HepG2 (cell line): ENCODE measurements at regions of chr6 and their contacts with region 1.

Region 1: GRCh38 chr6:119110601-119111548 is 32.4 kb upstream of the FAM184A start:
- DNase-seq: peak; percentile 69
- ATAC-seq: peak; percentile 93
- H3K4me3 ChIP-seq: peak overlapping the region in 2 of 3 experiments; percentile 12 to 41; a peak in 1 of 6 replicates
- H3K27ac ChIP-seq: no peak overlapping the region
- H3K4me1 ChIP-seq: peaks cover 17% of the 10 kb centered on the region
- H3K27me3 ChIP-seq: no peaks in the 10 kb centered on the region
- CTCF ChIP-seq: peak; percentile 88
- EP300 ChIP-seq: no peak
- POLR2A ChIP-seq: no peak
- RAD21 ChIP-seq: peak; percentile 86

Region 2: DNA sequence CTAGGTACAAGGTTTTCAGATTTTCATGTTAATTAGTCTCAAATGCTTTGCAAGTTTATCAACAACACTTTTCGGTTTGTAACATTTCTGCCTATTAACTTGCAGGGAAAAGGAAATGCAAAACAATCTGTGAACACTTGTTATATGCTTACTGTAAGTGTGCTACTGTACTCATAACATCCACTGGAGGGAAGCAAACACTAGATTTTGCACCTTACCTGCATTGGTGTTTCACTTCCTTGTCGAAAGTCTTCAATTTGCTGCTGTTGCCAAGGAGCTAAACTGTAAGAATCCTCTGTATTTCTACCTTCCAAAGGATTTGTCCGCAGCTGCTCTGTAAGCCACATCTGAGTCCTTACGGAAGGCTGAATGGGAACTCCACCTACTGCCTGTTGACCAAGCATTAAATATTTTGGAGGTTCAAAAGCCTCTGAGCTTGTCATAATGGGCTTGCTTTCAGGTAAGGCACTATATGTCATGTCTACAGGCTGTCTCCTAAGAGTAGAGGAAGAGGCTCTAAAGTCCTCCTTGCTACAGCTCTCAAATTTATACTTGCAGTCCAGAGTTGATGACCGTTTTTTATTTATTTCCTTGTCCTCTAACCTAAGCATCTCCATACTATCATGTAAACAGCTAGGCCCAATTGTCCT is 545.4 kb before region 1 on chr6:
- CTCF ChIA-PET with region 1: no interaction called
- POLR2A ChIA-PET with region 1: no interaction called
- in situ Hi-C with region 1: no loop called
- intact Hi-C with region 1: loop called (anchors 2 kb)
- DNase-seq: peak; percentile 36
- ATAC-seq: peak; percentile 87
- H3K4me3 ChIP-seq: no peak overlapping the region
- H3K27ac ChIP-seq: no peak overlapping the region
- H3K4me1 ChIP-seq: no peaks in the 10 kb centered on the region
- H3K27me3 ChIP-seq: no peaks in the 10 kb centered on the region
- CTCF ChIP-seq: peak; percentile 70
- EP300 ChIP-seq: no peak
- POLR2A ChIP-seq: no peak
- RAD21 ChIP-seq: peak; percentile 25; the same call in 1 of the 2 replicates

Region 3: DNA sequence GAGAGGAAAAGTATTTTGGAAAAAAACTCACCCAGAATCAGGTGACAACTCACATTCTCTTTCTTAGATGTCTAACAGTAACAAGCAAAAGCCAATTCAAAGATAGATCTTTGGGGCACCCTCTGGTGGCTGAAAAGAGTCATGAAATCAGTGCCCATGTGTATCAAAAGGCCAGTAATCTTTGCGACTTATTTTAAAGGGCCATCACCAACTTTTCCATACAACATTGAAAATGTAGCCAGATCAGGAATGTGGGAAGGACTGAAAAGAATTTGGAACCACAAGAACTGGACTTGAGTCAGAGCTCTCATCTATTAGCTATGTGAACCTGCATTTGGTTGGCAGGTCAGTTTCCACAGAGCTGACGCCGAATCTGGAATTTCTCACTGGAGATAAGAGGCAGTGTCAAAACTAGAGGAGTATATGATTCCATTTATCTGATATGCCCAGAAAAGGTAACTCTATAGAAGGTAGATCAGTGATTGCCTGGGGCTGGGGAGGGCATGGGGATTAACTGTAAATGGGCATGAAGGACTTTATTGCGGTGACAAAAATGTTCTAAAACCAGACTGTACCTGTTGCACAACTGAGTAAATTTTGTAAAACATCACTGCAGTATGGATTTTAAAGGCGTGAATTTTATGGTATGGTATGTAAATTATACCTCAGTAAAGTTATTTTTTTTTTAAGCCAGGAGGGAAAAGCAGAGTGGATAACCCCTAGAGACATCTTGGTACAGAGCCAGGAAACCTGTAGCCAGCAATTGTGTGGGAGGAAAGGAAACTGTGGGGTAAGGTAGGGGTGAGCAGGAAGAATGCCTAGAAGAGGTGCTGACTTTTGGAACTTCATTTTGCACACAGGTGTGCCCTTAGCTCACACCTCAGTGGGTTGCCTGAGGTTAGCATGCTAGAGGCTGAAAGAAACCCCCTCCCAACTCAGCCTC is 334.0 kb before region 1 on chr6:
- CTCF ChIA-PET with region 1: no interaction called
- POLR2A ChIA-PET with region 1: no interaction called
- in situ Hi-C with region 1: no loop called
- intact Hi-C with region 1: loop called (anchors 10 kb)
- DNase-seq: peak; percentile 64
- ATAC-seq: peak; percentile 91
- H3K4me3 ChIP-seq: no peak overlapping the region
- H3K27ac ChIP-seq: no peak overlapping the region
- H3K4me1 ChIP-seq: no peaks in the 10 kb centered on the region
- H3K27me3 ChIP-seq: peaks cover 0 to 10% of the 10 kb centered on the region in 2 experiments; a peak in 3 of 5 replicates
- CTCF ChIP-seq: peak; percentile 70
- EP300 ChIP-seq: no peak
- POLR2A ChIP-seq: no peak
- RAD21 ChIP-seq: peak; percentile 47

Region 4: DNA sequence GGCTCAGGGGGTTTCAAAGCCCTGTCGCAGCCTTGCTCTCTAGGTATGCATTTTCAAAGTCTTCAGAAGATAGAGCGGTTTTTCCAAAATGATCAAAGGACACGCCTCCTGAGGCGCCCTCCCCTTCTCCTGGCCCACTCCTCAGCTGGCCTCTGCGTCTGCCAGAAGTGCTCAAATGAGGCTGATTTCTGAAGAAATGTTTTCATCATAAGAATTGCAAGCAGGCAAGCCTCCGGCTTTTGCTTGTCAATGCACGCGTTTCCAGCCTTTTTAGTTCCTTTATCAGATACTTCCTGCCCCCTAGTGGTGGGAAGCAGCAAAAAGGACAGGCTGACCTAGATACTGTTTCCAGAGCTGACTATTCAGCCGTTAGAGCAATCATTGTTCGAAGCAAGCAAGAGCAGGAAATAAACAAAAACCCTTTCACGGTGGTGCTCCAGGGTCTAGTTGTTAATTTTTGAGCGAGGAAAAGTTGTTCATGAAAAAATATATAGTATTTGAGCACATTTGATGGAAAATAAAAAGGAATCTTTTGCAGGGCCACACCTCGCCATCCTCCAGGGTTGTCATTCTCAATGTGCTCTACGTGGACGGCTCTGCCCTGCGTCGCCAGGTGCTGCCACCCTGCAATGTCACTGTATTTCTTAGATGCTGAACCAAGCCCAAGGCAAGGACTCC is 310.3 kb before region 1 on chr6:
- CTCF ChIA-PET with region 1: interaction called, 3 read pairs
- POLR2A ChIA-PET with region 1: no interaction called
- in situ Hi-C with region 1: no loop called
- intact Hi-C with region 1: loop called (anchors 10 kb)
- DNase-seq: peak; percentile 82
- ATAC-seq: peak; percentile 94
- H3K4me3 ChIP-seq: peak overlapping the region in 1 of 3 experiments; percentile 31; a peak in 2 of 6 replicates
- H3K27ac ChIP-seq: no peak overlapping the region
- H3K4me1 ChIP-seq: peaks cover 16% of the 10 kb centered on the region
- H3K27me3 ChIP-seq: no peaks in the 10 kb centered on the region
- CTCF ChIP-seq: peak; percentile 92
- EP300 ChIP-seq: no peak
- POLR2A ChIP-seq: no peak
- RAD21 ChIP-seq: peak; percentile 63

Region 5: GRCh38 chr6:118893807-118894424 is 217.0 kb before region 1 on chr6 and contains the start of gene ASF1A:
- CTCF ChIA-PET with region 1: interaction called, 3 read pairs
- POLR2A ChIA-PET with region 1: interaction called, 4 read pairs
- in situ Hi-C with region 1: no loop called
- intact Hi-C with region 1: loop called (anchors 1 kb)
- DNase-seq: peak; percentile 99
- ATAC-seq: peak; percentile 93
- H3K4me3 ChIP-seq: peak within 1 kb of the TSS; percentile 84 to 98 (median 94)
- H3K27ac ChIP-seq: peak within 1 kb of the TSS; percentile 96
- H3K4me1 ChIP-seq: peaks cover 44% of the 10 kb centered on the region
- H3K27me3 ChIP-seq: no peaks in the 10 kb centered on the region; a peak in 1 of 5 replicates
- CTCF ChIP-seq: peak; percentile 94
- EP300 ChIP-seq: peak; percentile 45 to 68
- POLR2A ChIP-seq: peak; percentile 77 to 95
- RAD21 ChIP-seq: peak; percentile 74
- total RNA-seq, gene ASF1A: 49.9 and 85.2 TPM in 2 replicates

Region 6: DNA sequence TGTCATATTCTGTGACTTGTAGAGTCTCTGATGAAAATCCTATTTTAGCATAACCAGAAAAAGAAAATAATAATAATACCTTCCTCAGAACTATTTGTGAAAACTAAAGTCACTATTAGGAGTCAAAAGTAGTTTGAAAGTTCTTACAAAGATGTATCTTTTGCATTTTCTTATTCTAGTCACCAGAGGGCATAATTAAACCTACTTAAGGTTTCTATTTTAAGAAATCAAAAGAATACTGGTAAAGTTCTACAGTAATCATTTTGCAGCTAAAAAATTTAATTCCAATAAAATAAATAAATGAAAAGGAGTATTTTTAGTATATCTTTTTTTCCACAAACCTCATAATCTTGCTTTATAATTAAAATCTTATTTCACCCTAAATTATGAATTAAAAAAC is 147.9 kb before region 1 on chr6:
- CTCF ChIA-PET with region 1: interaction called, 21 read pairs
- POLR2A ChIA-PET with region 1: no interaction called
- in situ Hi-C with region 1: no loop called
- intact Hi-C with region 1: loop called (anchors 1 kb)
- DNase-seq: no peak
- ATAC-seq: no peak
- H3K4me3 ChIP-seq: no peak overlapping the region
- H3K27ac ChIP-seq: no peak overlapping the region
- H3K4me1 ChIP-seq: 0 out of 2 replicates have a peak, but pooled peaks cover 7% of the 10 kb centered on the region
- H3K27me3 ChIP-seq: no peaks in the 10 kb centered on the region
- CTCF ChIP-seq: no peak
- EP300 ChIP-seq: no peak
- POLR2A ChIP-seq: no peak
- RAD21 ChIP-seq: no peak

Region 7: GRCh38 chr6:118968416-118968815 is 142.5 kb before region 1 on chr6:
- CTCF ChIA-PET with region 1: interaction called, 21 read pairs
- POLR2A ChIA-PET with region 1: no interaction called
- in situ Hi-C with region 1: loop called (anchors 5 kb)
- intact Hi-C with region 1: loop called (anchors 1 kb)
- DNase-seq: peak; percentile 26
- ATAC-seq: peak; percentile 46; the same call in 1 of the 3 replicates
- H3K4me3 ChIP-seq: no peak overlapping the region
- H3K27ac ChIP-seq: no peak overlapping the region
- H3K4me1 ChIP-seq: 0 out of 2 replicates have a peak, but pooled peaks cover 7% of the 10 kb centered on the region
- H3K27me3 ChIP-seq: no peaks in the 10 kb centered on the region
- CTCF ChIP-seq: peak; percentile 54
- EP300 ChIP-seq: no peak
- POLR2A ChIP-seq: no peak
- RAD21 ChIP-seq: peak; percentile 32; the same call in 1 of the 2 replicates

Region 8: GRCh38 chr6:119129148-119129967 is 18.5 kb after region 1 on chr6:
- CTCF ChIA-PET with region 1: no interaction called
- POLR2A ChIA-PET with region 1: no interaction called
- in situ Hi-C with region 1: no loop called
- intact Hi-C with region 1: no loop called
- DNase-seq: peak; percentile 76
- ATAC-seq: peak; percentile 80
- H3K4me3 ChIP-seq: peak overlapping the region in 1 of 3 experiments; percentile 6; a peak in 1 of 6 replicates
- H3K27ac ChIP-seq: peak overlapping the region; percentile 35
- H3K4me1 ChIP-seq: peaks cover 43% of the 10 kb centered on the region
- H3K27me3 ChIP-seq: no peaks in the 10 kb centered on the region
- CTCF ChIP-seq: peak; percentile 82
- EP300 ChIP-seq: no peak
- POLR2A ChIP-seq: no peak
- RAD21 ChIP-seq: peak; percentile 62